ENCODE measurements at regions of chr12 and their contacts with region 1.

Region 1: DNA sequence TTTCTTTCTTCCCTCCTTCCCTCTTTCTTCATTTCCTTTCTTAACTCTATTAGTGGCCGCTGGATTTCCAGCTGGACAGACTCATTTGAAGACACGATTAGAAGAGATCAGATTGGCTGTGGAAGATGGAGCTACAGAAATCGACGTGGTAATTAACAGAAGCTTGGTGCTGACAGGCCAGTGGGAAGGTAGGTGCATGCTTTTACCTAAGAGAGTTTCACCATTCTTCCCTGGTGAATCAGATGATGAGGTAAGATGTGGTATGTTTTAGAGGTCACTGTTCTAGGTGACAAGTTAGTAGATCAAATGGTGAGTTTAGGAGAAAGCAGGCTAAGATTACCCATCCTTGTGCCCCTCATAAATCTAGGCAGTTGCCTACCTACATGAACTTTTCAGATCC is 51.6 kb downstream of the DERA start:
- DNase-seq: peak; percentile 77
- ATAC-seq: peak; percentile 88
- H3K4me3 ChIP-seq: peak overlapping the region; percentile 39; the same call in 1 of the 2 replicates
- H3K27ac ChIP-seq: peak overlapping the region; percentile 95
- H3K4me1 ChIP-seq: peaks cover 29% of the 10 kb centered on the region
- H3K27me3 ChIP-seq: no peaks in the 10 kb centered on the region
- CTCF ChIP-seq: no peak

Region 2: GRCh38 chr12:15910864-15911721 is 51.7 kb before region 1 on chr12 and contains the start of gene DERA:
- CTCF ChIA-PET with region 1: no interaction called
- POLR2A ChIA-PET with region 1: interaction called, 24 read pairs
- intact Hi-C with region 1: no loop called
- DNase-seq: peak; percentile 78
- ATAC-seq: peak; percentile 99
- H3K4me3 ChIP-seq: peak within 1 kb of the TSS; percentile 74
- H3K27ac ChIP-seq: peak within 1 kb of the TSS; percentile 70
- H3K4me1 ChIP-seq: peaks cover 14% of the 10 kb centered on the region
- H3K27me3 ChIP-seq: no peaks in the 10 kb centered on the region
- CTCF ChIP-seq: no peak
- total RNA-seq, gene DERA: 34.6 and 49.4 TPM in 2 replicates